Heart left ventricle (tissue), 16 donors: ENCODE measurements at regions of chr5 and their contacts with region 1.

Region 1: GRCh38 chr5:173232499-173233346 is 2.3 kb downstream of the NKX2-5 start:
- DNase-seq: peak in 1 of 5 donors; percentile 34
- ATAC-seq: no peak
- H3K4me3 ChIP-seq: peak overlapping the region; percentile 47 to 93 (median 63)
- H3K27ac ChIP-seq: peak overlapping the region in 11 of 12 donors; percentile 46 to 95 (median 89)
- H3K4me1 ChIP-seq: peaks cover 0 to 58% (median 26%) of the 10 kb centered on the region in 12 donors
- H3K27me3 ChIP-seq: peaks cover 14 to 98% (median 69%) of the 10 kb centered on the region in 9 donors
- CTCF ChIP-seq: no peak
- POLR2A ChIP-seq: no peak

Region 2: GRCh38 chr5:173513521-173513991 is 280.8 kb after region 1 on chr5:
- intact Hi-C with region 1: loop called in 1 of 10 experiments (anchors 5 kb)
- DNase-seq: no peak
- ATAC-seq: no peak
- H3K4me3 ChIP-seq: no peak overlapping the region
- H3K27ac ChIP-seq: no peak overlapping the region
- H3K4me1 ChIP-seq: no peaks in the 10 kb centered on the region
- H3K27me3 ChIP-seq: peaks cover 0 to 8% (median 0%) of the 10 kb centered on the region in 9 donors
- CTCF ChIP-seq: peak in 2 of 12 donors; percentile 7 to 13
- POLR2A ChIP-seq: no peak

Region 3: DNA sequence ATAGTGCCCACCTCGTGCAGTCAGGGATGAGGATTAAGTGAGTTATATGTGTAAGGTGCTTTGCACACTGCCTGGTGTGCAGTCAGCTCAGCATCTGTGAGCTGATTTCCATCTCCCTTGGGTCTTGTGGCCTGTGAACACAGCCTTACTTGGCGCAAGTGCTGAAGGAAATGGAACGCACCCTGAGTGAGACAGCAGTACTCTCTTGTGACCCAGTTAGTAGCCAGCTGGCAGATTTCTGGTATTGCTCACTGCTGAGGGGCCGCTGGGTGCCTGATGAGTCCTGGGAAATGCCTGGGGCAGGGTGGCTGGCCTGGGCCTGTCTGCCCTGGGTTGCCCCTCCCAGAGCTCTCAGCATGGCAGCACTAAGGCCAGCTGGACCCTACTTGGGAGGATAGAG is 474.7 kb after region 1 on chr5:
- intact Hi-C with region 1: no loop called
- DNase-seq: peak; percentile 63 to 80 (median 73)
- ATAC-seq: peak; percentile 79 to 90 (median 88)
- H3K4me3 ChIP-seq: no peak overlapping the region
- H3K27ac ChIP-seq: peak overlapping the region; percentile 8 to 79 (median 63)
- H3K4me1 ChIP-seq: peaks cover 0 to 31% (median 16%) of the 10 kb centered on the region in 12 donors
- H3K27me3 ChIP-seq: no peaks in the 10 kb centered on the region
- CTCF ChIP-seq: no peak
- POLR2A ChIP-seq: no peak